Mammary epithelial cell (primary cell): ENCODE measurements at regions of chr11 and their contacts with region 1.

Region 1: DNA sequence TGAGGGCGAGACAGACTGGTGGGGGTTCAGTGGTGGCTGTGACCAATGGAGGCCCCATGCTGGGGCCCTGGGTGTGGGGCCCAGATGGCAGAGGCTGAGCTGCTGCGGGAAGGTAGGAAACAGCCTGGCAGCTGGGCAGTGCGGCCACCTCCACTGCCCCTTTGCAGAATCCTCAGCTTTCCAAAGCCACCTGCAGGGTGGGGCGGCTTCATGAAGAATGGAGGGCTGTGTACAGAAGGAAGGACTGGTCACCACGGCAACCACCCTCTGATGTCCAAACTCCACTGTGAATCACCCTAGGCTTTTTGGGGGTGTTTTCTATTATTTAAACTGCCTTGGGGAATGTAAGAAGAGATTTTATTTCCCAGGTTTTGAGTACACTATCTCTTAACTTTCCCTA is 166.3 kb upstream of the NAV2 start:
- DNase-seq: no peak
- H3K4me3 ChIP-seq: no peak overlapping the region
- H3K27ac ChIP-seq: no peak overlapping the region
- H3K4me1 ChIP-seq: no peaks in the 10 kb centered on the region
- H3K27me3 ChIP-seq: no peaks in the 10 kb centered on the region
- CTCF ChIP-seq: no peak

Region 2: DNA sequence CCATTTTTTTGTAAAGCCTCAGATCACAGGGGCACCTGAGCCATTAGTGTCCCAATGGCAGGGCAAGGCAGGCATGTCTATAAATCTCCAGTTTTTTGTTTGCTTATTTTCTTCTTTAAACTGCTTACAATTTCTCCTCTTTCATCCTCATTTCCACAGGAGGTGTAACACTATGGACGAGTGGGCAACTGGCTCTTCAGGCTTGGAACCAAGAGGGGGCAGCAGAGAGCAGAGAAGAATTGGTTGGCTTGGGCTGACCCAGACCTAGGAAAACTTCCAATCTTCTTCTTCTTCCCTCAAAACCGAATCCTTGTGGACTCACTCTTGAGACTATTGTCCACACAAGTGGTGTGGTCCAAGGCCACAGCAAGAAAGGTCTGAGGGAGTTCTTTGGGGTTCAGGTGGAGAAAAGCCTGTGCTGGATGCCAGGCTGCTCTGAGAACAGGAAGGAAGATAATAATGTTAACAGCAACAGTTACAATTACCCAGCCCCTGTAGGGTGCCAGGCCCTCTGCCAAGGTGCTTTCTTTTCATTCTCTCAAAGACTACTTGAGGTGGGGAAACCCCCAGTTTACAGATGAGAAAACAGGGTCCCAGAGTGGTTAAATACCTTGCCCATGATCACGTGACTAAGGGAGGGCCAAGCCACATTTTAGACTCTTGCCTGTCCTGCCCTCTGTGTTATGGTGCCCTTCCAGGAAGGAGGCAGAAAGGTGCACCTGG is 234.9 kb before region 1 on chr11:
- CTCF ChIA-PET with region 1: no interaction called
- dilution Hi-C with region 1: no loop called
- in situ Hi-C with region 1: loop called (anchors 5 to 10 kb)
- intact Hi-C with region 1: no loop called
- DNase-seq: peak; percentile 24
- H3K4me3 ChIP-seq: no peak overlapping the region
- H3K27ac ChIP-seq: no peak overlapping the region
- H3K4me1 ChIP-seq: no peaks in the 10 kb centered on the region
- H3K27me3 ChIP-seq: no peaks in the 10 kb centered on the region
- CTCF ChIP-seq: peak; percentile 89 to 95